ENCODE measurements at regions of chr12 and their contacts with region 1.

Region 1: GRCh38 chr12:12138203-12139154 is 67.7 kb downstream of the BCL2L14 start:
- DNase-seq: no peak
- ATAC-seq: no peak
- H3K4me3 Mint-ChIP-seq: no peak overlapping the region
- H3K27ac Mint-ChIP-seq: no peak overlapping the region
- H3K4me1 Mint-ChIP-seq: peaks cover 6% of the 10 kb centered on the region
- H3K27me3 Mint-ChIP-seq: no peaks in the 10 kb centered on the region
- CTCF ChIP-seq: no peak

Region 2: DNA sequence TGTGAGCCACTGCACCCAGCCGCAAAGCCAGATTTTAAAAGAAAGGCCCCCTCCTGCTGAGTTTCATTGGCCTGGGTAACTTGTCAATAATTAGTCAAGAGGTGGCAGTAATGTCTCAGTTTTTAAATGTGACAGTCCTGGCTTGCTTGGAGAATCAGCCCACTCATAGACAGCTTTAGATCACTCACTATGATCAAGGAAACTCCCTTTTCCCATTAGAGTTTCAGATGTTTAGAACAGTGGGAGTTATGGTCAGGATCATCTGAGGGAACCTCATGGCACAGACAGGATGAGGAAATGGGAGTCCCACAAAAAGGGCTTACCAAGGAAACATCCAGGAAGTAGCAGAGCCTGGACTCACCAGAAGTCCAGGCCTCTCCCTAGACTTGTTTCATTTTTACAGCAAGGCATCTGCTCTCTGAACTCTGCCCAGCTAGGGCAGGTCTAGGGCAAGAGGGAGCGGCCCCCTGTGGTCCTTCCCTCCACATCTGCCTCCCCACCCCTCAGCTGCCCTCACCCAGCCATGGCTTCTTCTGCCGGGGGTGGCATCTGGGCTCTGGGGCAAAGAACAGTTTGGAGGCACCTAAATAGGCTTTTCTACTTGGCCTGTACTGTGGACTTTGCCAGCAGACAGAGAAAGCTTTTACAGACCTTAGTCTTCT is 56.5 kb before region 1 on chr12:
- CTCF ChIA-PET with region 1: interaction called, 10 read pairs
- POLR2A ChIA-PET with region 1: no interaction called
- DNase-seq: no peak
- ATAC-seq: peak; percentile 74
- H3K4me3 Mint-ChIP-seq: no peak overlapping the region
- H3K27ac Mint-ChIP-seq: no peak overlapping the region
- H3K4me1 Mint-ChIP-seq: peaks cover 30% of the 10 kb centered on the region
- H3K27me3 Mint-ChIP-seq: no peaks in the 10 kb centered on the region
- CTCF ChIP-seq: no peak

Measured in WTC11 (cell line).